CD4-positive, alpha-beta memory T cell (primary cell): ENCODE measurements at regions of chr19 and their contacts with region 1.

Region 1: GRCh38 chr19:29714953-29715700 is at the start of gene C19orf12:
- DNase-seq: peak in 4 of 5 donors; percentile 53 to 86 (median 80)
- H3K4me3 ChIP-seq: peak within 1 kb of the TSS; percentile 80 to 84
- H3K4me3 Mint-ChIP-seq: peak within 1 kb of the TSS; percentile 88 to 95 (median 92)
- H3K27ac ChIP-seq: peak within 1 kb of the TSS; percentile 88
- H3K27ac Mint-ChIP-seq: peak within 1 kb of the TSS; percentile 95 to 98 (median 98)
- H3K4me1 ChIP-seq: peaks cover 56% of the 10 kb centered on the region
- H3K4me1 Mint-ChIP-seq: peaks cover 41 to 60% (median 52%) of the 10 kb centered on the region in 4 donors
- H3K27me3 ChIP-seq: no peaks in the 10 kb centered on the region
- H3K27me3 Mint-ChIP-seq: no peaks in the 10 kb centered on the region
- total RNA-seq, gene C19orf12: 29.3 to 30.1 TPM

Region 2: GRCh38 chr19:29212648-29213573 is 502.2 kb before region 1 on chr19 and contains the start of gene UQCRFS1:
- CTCF ChIA-PET with region 1: no interaction called
- POLR2A ChIA-PET with region 1: no interaction called
- intact Hi-C with region 1: loop called (anchors 2 kb)
- DNase-seq: peak; percentile 93 to 96 (median 95)
- H3K4me3 ChIP-seq: peak within 1 kb of the TSS; percentile 75 to 82
- H3K4me3 Mint-ChIP-seq: peak within 1 kb of the TSS; percentile 93 to 99 (median 98)
- H3K27ac ChIP-seq: peak within 1 kb of the TSS; percentile 88
- H3K27ac Mint-ChIP-seq: peak within 1 kb of the TSS; percentile 94 to 99 (median 99)
- H3K4me1 ChIP-seq: peaks cover 36% of the 10 kb centered on the region
- H3K4me1 Mint-ChIP-seq: peaks cover 34 to 50% (median 42%) of the 10 kb centered on the region in 4 donors
- H3K27me3 ChIP-seq: no peaks in the 10 kb centered on the region
- H3K27me3 Mint-ChIP-seq: peaks cover 1 to 10% of the 10 kb centered on the region in 2 donors
- total RNA-seq, gene UQCRFS1: 16.2 to 17.6 TPM

Region 3: GRCh38 chr19:29665215-29665825 is 49.8 kb before region 1 on chr19 and contains the start of gene PLEKHF1:
- CTCF ChIA-PET with region 1: interaction called, 142 read pairs
- POLR2A ChIA-PET with region 1: interaction called, 138 read pairs
- intact Hi-C with region 1: loop called (anchors 2 kb)
- DNase-seq: peak; percentile 73 to 88 (median 78)
- H3K4me3 ChIP-seq: peak within 1 kb of the TSS; percentile 77 to 83
- H3K4me3 Mint-ChIP-seq: peak within 1 kb of the TSS; percentile 89 to 98 (median 93)
- H3K27ac ChIP-seq: peak within 1 kb of the TSS; percentile 92
- H3K27ac Mint-ChIP-seq: peak within 1 kb of the TSS; percentile 92 to 100 (median 96)
- H3K4me1 ChIP-seq: peaks cover 42% of the 10 kb centered on the region
- H3K4me1 Mint-ChIP-seq: peaks cover 24 to 62% (median 38%) of the 10 kb centered on the region in 4 donors
- H3K27me3 ChIP-seq: no peaks in the 10 kb centered on the region
- H3K27me3 Mint-ChIP-seq: no peaks in the 10 kb centered on the region
- total RNA-seq, gene PLEKHF1: 31.2 to 32.4 TPM

Region 4: GRCh38 chr19:29687244-29687896 is 27.8 kb before region 1 on chr19:
- CTCF ChIA-PET with region 1: interaction called, 278 read pairs
- POLR2A ChIA-PET with region 1: interaction called, 22 read pairs
- intact Hi-C with region 1: no loop called
- DNase-seq: no peak
- H3K4me3 ChIP-seq: no peak overlapping the region
- H3K4me3 Mint-ChIP-seq: no peak overlapping the region
- H3K27ac ChIP-seq: no peak overlapping the region
- H3K27ac Mint-ChIP-seq: peak overlapping the region in 1 of 7 donors; percentile 77
- H3K4me1 ChIP-seq: peaks cover 13% of the 10 kb centered on the region
- H3K4me1 Mint-ChIP-seq: peaks cover 20 to 59% (median 44%) of the 10 kb centered on the region in 4 donors
- H3K27me3 ChIP-seq: no peaks in the 10 kb centered on the region
- H3K27me3 Mint-ChIP-seq: no peaks in the 10 kb centered on the region

Region 5: GRCh38 chr19:29941828-29942403 is 226.8 kb after region 1 on chr19 and contains the start of gene URI1:
- CTCF ChIA-PET with region 1: interaction called, 4 read pairs
- POLR2A ChIA-PET with region 1: interaction called, 11 read pairs
- intact Hi-C with region 1: no loop called
- DNase-seq: peak; percentile 88 to 95 (median 91)
- H3K4me3 ChIP-seq: peak within 1 kb of the TSS; percentile 88 to 93
- H3K4me3 Mint-ChIP-seq: peak within 1 kb of the TSS; percentile 95 to 99 (median 96)
- H3K27ac ChIP-seq: peak within 1 kb of the TSS; percentile 78
- H3K27ac Mint-ChIP-seq: peak within 1 kb of the TSS; percentile 78 to 98 (median 95)
- H3K4me1 ChIP-seq: peaks cover 50% of the 10 kb centered on the region
- H3K4me1 Mint-ChIP-seq: peaks cover 28 to 48% (median 39%) of the 10 kb centered on the region in 4 donors
- H3K27me3 ChIP-seq: no peaks in the 10 kb centered on the region
- H3K27me3 Mint-ChIP-seq: peaks cover 0 to 6% of the 10 kb centered on the region in 2 donors
- total RNA-seq, gene URI1: 91.7 to 95.0 TPM